ENCODE measurements at regions of chr16 and their contacts with region 1.

Region 1: DNA sequence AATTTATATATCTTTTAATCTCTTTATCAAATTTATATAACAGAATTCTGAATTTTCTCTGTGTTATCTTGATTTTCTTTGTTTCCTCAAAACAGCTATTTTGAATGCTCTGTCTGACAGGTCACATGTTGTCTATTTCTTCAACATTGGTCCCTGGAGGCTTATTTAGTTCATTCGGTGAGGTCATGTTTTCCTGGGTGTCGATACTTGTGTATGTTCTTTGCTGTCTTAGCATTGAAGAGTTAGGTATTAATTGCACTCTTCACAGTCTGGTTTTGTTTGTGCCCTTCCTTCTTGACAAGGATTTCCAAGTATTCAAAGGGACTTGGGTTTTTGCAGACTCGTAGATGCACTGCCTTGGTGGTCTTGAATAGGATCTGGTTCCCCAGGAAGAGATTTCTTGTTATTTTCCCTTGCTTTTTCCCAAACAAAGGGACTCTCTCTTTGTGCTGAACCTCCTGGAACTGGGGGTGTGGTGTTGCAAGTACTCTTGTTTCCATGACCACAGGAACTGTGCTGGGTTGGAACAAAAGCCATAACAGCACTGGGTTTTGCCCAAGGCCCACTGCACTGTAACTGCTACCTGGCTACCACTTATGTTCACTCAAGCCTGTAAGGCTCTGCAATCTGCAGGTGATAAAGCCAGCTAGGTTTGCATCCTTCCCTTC is 1483.0 kb downstream of the CDH8 start:
- DNase-seq: no peak
- ATAC-seq: no peak
- H3K4me3 ChIP-seq: no peak overlapping the region
- H3K27ac ChIP-seq: no peak overlapping the region
- H3K4me1 ChIP-seq: no peaks in the 10 kb centered on the region
- H3K27me3 ChIP-seq: no peaks in the 10 kb centered on the region
- CTCF ChIP-seq: no peak

Region 2: GRCh38 chr16:60041671-60042070 is 511.6 kb before region 1 on chr16:
- intact Hi-C with region 1: loop called in 1 of 10 experiments (anchors 5 kb)
- DNase-seq: no peak
- ATAC-seq: no peak
- H3K4me3 ChIP-seq: no peak overlapping the region
- H3K27ac ChIP-seq: no peak overlapping the region
- H3K4me1 ChIP-seq: no peaks in the 10 kb centered on the region
- H3K27me3 ChIP-seq: no peaks in the 10 kb centered on the region
- CTCF ChIP-seq: no peak

Region 3: DNA sequence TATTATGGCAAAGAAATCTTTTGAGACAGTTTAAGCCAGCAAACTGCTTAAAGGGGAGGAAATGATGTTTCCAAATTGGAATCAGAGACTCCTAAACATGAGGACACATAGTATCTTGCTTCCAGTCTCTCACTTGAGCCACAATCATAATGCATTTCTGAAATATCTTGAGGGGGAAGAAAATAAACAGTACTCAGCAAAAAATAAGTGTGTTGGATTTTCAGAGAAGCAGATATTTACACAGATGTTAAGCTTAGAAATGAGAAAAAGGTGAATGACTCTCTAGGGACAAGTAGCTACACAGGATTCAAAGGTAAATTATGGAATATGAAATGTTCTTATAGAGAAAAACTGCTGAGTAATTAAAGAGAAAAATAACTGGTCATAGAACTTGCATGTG is 100.6 kb before region 1 on chr16:
- intact Hi-C with region 1: no loop called
- DNase-seq: no peak
- ATAC-seq: no peak
- H3K4me3 ChIP-seq: no peak overlapping the region
- H3K27ac ChIP-seq: no peak overlapping the region
- H3K4me1 ChIP-seq: no peaks in the 10 kb centered on the region
- H3K27me3 ChIP-seq: no peaks in the 10 kb centered on the region
- CTCF ChIP-seq: no peak

Region 4: GRCh38 chr16:60491273-60491672 is 62.0 kb before region 1 on chr16:
- intact Hi-C with region 1: no loop called
- DNase-seq: no peak
- ATAC-seq: no peak
- H3K4me3 ChIP-seq: no peak overlapping the region
- H3K27ac ChIP-seq: no peak overlapping the region
- H3K4me1 ChIP-seq: no peaks in the 10 kb centered on the region
- H3K27me3 ChIP-seq: no peaks in the 10 kb centered on the region
- CTCF ChIP-seq: no peak

Region 5: GRCh38 chr16:60510941-60511340 is 42.3 kb before region 1 on chr16:
- intact Hi-C with region 1: no loop called
- DNase-seq: no peak
- ATAC-seq: no peak
- H3K4me3 ChIP-seq: no peak overlapping the region
- H3K27ac ChIP-seq: no peak overlapping the region
- H3K4me1 ChIP-seq: no peaks in the 10 kb centered on the region
- H3K27me3 ChIP-seq: no peaks in the 10 kb centered on the region
- CTCF ChIP-seq: no peak